MCF 10A (cell line): ENCODE measurements at regions of chr1 and their contacts with region 1.

Region 1: DNA sequence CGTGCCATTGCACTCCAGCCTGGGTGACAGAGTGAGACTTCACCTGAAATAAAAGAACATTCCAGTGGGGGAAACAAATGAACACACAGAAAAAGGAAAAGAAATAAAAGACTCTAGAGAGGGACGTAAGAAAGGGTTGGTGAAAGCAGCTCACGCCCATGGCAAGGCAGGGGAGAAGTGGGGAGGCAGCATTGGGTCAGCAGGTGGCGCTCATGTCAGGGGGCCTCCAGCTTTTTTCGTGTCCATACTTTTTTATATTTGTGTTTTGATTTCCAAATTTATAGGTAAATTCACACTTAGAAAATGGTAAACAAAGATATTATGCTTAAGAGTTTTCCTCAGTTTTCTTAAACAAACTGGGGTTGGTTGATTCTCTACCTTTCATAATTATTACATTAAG is 45.5 kb downstream of the VPS13D start:
- DNase-seq: peak; percentile 27
- H3K4me3 Mint-ChIP-seq: no peak overlapping the region
- H3K27ac Mint-ChIP-seq: no peak overlapping the region
- H3K4me1 Mint-ChIP-seq: no peaks in the 10 kb centered on the region
- H3K27me3 Mint-ChIP-seq: no peaks in the 10 kb centered on the region
- CTCF ChIP-seq: peak; percentile 34

Region 2: GRCh38 chr1:12229835-12230548 is 45.4 kb before region 1 on chr1 and contains the start of gene VPS13D:
- CTCF ChIA-PET with region 1: interaction called, 5 read pairs
- POLR2A ChIA-PET with region 1: no interaction called
- intact Hi-C with region 1: loop called (anchors 1 kb)
- DNase-seq: peak; percentile 78
- H3K4me3 Mint-ChIP-seq: peak within 1 kb of the TSS; percentile 85
- H3K27ac Mint-ChIP-seq: peak within 1 kb of the TSS; percentile 88
- H3K4me1 Mint-ChIP-seq: no peaks in the 10 kb centered on the region
- H3K27me3 Mint-ChIP-seq: no peaks in the 10 kb centered on the region
- CTCF ChIP-seq: peak; percentile 96
- total RNA-seq, gene VPS13D: 36.5 and 39.3 TPM in 2 replicates

Region 3: DNA sequence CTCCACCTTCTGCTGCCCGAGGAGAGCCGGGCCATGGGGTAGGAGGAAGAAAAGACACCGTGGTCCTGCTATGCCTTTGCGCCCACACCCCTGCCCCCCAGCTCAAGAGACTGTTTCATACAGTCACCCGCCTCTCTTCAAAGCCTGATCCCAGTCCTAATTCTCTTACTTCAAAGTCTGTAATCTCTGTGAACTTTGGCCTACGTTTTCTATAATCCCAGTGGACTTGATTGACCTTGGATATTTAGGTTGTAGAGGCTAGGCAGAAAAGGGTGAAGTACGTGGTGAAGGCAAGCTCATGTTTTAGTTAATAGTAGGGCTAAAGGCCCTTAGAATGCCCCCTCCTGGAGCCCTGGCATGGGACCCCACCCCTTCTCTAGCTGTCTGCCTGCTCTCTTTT is 17.1 kb before region 1 on chr1:
- CTCF ChIA-PET with region 1: interaction called, 11 read pairs
- POLR2A ChIA-PET with region 1: interaction called, 4 read pairs
- intact Hi-C with region 1: no loop called
- DNase-seq: no peak
- H3K4me3 Mint-ChIP-seq: no peak overlapping the region
- H3K27ac Mint-ChIP-seq: no peak overlapping the region
- H3K4me1 Mint-ChIP-seq: no peaks in the 10 kb centered on the region
- H3K27me3 Mint-ChIP-seq: no peaks in the 10 kb centered on the region
- CTCF ChIP-seq: no peak

Region 4: GRCh38 chr1:12294076-12294475 is 18.7 kb after region 1 on chr1:
- CTCF ChIA-PET with region 1: interaction called, 10 read pairs
- POLR2A ChIA-PET with region 1: interaction called, 5 read pairs
- intact Hi-C with region 1: no loop called
- DNase-seq: peak; percentile 8
- H3K4me3 Mint-ChIP-seq: no peak overlapping the region
- H3K27ac Mint-ChIP-seq: no peak overlapping the region
- H3K4me1 Mint-ChIP-seq: no peaks in the 10 kb centered on the region
- H3K27me3 Mint-ChIP-seq: no peaks in the 10 kb centered on the region
- CTCF ChIP-seq: no peak

Region 5: GRCh38 chr1:12348113-12348512 is 72.7 kb after region 1 on chr1:
- CTCF ChIA-PET with region 1: no interaction called
- POLR2A ChIA-PET with region 1: no interaction called
- intact Hi-C with region 1: no loop called
- DNase-seq: no peak
- H3K4me3 Mint-ChIP-seq: no peak overlapping the region
- H3K27ac Mint-ChIP-seq: no peak overlapping the region
- H3K4me1 Mint-ChIP-seq: no peaks in the 10 kb centered on the region
- H3K27me3 Mint-ChIP-seq: no peaks in the 10 kb centered on the region
- CTCF ChIP-seq: no peak

Region 6: GRCh38 chr1:12658531-12659453 is 383.4 kb after region 1 on chr1:
- CTCF ChIA-PET with region 1: interaction called, 20 read pairs
- POLR2A ChIA-PET with region 1: no interaction called
- intact Hi-C with region 1: loop called (anchors 1 kb)
- DNase-seq: peak; percentile 88
- H3K4me3 Mint-ChIP-seq: no peak overlapping the region
- H3K27ac Mint-ChIP-seq: no peak overlapping the region
- H3K4me1 Mint-ChIP-seq: peaks cover 5% of the 10 kb centered on the region
- H3K27me3 Mint-ChIP-seq: peaks cover 44% of the 10 kb centered on the region
- CTCF ChIP-seq: peak; percentile 85